ENCODE measurements at regions of chr16 and their contacts with region 1.

Region 1: DNA sequence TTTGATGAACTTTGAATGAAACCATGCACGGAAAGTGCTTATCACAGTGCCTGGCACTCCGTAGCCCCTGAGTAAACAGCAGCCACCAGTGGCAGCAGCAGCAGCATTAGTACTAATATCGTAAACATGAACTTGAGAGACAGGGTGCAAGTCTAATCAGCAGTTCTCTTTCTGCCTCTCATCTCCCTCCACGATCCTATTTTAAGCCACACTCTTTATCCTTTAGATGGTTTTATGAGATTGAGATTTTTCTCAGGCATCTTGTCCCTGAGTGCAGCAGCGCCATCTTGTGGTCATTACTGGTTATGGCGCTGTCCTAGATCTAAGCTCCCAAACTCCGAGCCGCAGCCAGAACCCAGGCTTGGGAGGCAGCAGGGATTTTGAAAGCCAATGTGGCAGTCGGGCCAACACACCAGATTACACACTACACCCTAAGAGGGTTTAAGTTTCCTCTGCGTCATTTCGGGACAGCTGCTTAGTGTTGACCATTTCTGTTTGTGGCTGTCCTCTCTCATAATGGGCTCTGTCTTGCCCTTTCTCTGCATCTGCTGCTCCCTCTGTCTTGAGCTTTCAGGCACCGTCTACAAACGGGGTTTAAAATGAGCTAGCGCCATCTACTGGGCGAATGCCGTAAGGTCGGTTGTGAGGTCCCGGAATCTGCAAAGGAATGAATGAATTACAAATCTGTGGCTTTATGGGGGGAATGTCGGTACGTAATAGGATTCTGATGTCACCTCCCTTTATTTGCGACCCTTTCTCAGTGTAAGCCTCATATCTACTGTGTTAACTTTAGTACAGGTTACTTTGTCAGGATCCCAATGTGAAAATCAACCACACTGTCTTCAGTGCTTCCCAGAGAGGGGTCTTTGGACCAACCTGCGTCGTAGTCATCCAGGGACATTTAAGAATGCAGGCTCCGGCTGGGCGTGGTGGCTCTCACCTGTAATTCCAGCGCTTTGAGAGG is 64.5 kb downstream of the CYLD start:
- DNase-seq: peak; percentile 49
- H3K4me3 ChIP-seq: peak overlapping the region; percentile 59
- CTCF ChIP-seq: peak; percentile 83

Region 2: DNA sequence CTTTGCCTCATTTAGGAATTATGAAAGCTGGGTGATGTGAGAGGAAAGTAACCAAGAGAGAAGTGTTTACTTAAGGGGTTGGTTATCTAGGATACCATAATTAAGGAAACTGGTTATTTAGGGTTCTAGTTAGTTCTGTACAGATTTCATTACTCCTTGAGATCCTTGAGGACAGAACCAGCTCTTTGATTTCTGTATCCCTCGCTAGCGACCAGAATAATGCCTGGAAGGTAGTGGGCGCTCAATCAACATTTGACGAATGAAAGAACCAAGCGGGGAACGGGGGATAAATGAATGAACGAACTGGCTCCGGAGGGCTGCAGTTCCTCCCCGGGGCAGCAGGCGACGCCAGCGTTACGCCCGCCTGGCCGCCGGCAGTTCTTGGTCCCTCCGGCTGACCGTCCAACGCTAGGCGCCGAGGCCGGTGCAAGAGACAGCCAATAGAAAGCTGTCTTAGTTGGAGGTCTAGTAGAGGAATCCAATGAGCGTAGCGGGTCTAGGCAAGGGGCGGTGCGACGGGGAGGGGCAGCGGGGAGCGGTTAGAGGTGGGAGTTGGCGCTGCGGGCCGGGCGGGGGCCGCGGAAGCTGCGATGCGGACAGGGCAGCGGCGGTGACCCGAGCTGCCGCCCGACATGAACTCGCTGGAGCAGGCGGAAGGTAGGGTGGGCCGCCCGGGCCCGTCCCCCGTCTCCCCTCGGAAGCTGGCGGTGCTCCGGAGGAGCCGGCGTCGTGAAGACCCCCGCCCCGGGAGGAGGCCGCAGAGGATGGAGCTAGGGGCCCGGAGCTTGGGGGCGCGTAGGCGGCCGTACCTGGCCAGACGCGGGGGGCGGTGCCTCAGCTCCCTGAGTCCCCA is 781.5 kb before region 1 on chr16 and contains the start of gene CNEP1R1:
- CTCF ChIA-PET with region 1: interaction called, 21 read pairs
- POLR2A ChIA-PET with region 1: no interaction called
- DNase-seq: peak; percentile 77
- H3K4me3 ChIP-seq: peak within 1 kb of the TSS; percentile 86
- CTCF ChIP-seq: peak; percentile 100

Region 3: DNA sequence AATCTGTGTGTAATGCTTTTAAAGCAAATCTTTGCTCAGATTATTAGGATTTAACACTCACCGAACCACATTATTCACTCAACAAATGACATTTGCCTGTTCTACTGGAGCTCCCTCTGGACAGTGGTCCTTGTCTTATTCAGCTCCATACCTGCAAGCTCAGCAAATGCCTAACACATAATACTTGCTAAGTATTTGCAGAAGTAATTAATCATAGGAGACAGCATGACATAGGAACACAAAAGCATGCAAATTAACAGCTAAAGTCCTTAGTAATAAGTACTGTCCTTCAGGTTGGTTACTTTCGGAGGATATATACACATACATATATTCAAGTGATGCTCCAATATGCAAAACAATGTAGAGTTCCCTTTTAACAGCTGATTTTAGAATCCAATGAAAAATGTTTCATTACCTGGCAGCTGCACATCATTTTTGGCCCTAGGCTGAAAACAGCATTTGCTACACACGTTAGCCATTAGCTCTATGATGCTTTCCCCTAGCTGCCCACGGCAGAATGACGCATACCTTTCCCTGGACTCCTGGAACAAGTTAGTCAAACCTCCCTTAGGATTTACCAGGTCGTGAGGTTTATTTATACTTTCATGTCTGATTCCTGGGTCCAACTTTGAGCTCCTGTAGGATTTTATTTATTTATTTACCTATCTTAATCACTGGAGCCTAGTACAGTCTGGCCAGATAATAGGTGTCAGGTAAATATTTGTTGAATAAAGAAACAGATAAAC is 446.2 kb before region 1 on chr16:
- CTCF ChIA-PET with region 1: interaction called, 11 read pairs
- POLR2A ChIA-PET with region 1: no interaction called
- DNase-seq: no peak
- H3K4me3 ChIP-seq: no peak overlapping the region
- CTCF ChIP-seq: no peak

Region 4: DNA sequence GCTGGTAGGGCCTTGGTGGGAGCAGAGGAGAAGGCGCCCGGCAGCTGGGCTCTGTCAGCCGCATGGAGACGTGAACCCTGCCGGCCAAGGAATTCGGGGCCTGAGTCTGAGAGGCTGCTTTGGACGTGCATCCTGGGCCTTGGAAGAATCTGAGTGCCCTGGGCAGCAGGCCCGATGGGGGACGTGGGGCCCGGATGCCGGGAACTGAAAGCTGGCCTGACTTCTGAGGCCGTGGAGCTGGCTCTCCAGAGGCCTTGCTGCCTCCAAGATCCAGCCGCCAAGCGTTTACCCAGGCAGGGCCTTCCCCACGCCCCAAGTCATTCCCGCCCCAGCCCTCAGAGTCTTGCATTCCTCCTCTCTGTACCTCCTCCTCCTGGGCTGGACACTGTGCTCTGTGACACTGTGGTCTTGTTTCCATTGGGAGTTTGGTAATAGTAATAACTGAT is 221.0 kb before region 1 on chr16:
- CTCF ChIA-PET with region 1: interaction called, 12 read pairs
- POLR2A ChIA-PET with region 1: no interaction called
- DNase-seq: no peak
- H3K4me3 ChIP-seq: no peak overlapping the region
- CTCF ChIP-seq: no peak

Region 5: DNA sequence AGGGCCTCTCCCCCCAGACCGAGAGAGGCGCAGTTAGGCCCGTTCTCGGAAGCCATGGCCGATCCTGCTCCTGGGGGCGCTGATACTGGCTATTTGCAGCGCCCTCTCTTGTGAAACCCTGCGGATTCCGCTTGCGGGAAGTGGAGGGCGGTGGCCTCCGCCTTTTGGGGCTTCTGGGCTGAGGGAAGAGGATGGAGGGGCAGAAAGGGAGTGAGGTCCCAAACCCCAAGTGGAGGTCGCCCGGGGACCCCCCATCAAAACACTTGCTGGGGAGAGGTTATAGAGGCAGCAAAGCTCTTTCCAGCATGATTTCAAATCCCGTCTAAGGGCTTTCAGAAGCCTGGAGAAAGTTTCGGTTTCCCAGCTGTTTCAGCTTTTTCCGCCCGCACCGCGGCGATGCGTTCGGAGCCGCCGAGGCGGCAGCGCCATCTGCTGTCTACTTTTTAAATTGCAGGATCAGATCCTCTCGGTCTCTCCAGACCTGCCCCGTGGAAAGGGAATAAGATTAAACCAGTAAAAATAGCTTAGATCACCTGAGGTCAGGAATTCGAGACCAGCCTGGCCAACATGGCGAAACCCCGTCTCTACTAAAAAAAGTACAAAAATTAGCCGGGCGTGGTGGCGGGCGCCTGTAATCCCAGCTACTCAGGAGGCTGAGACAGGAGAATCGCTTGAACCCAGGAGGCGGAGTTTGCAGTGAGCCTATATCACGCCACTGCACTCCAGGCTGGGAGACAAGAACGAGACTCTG is 141.1 kb before region 1 on chr16:
- CTCF ChIA-PET with region 1: interaction called, 160 read pairs
- POLR2A ChIA-PET with region 1: no interaction called
- DNase-seq: no peak
- H3K4me3 ChIP-seq: peak overlapping the region; percentile 58
- CTCF ChIP-seq: peak; percentile 69

Region 6: GRCh38 chr16:50776037-50776436 is 30.3 kb before region 1 on chr16:
- CTCF ChIA-PET with region 1: interaction called, 23 read pairs
- POLR2A ChIA-PET with region 1: no interaction called
- DNase-seq: no peak
- H3K4me3 ChIP-seq: no peak overlapping the region
- CTCF ChIP-seq: no peak

Region 7: DNA sequence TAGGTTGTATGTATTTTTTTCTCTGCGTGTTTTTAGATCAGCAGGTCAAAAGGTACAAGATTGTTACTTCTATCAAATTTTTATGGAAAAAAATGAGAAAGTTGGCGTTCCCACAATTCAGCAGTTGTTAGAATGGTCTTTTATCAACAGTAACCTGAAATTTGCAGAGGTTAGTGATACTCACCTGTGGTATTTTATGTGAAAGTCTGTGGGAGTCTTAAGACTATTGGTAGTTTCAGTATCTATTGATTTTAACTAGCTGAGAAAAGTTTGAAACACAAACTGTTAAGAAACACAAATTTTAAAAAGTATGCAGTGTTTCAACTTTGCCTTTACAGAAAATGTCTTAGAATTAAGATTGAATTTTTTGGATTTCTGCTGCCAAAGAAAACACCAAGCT is 14.9 kb before region 1 on chr16:
- CTCF ChIA-PET with region 1: interaction called, 100 read pairs
- POLR2A ChIA-PET with region 1: no interaction called
- DNase-seq: no peak
- H3K4me3 ChIP-seq: no peak overlapping the region
- CTCF ChIP-seq: no peak

Measured in AG04449 (cell line).